HCT116 (cell line): ENCODE measurements at regions of chr14 and their contacts with region 1.

Region 1: DNA sequence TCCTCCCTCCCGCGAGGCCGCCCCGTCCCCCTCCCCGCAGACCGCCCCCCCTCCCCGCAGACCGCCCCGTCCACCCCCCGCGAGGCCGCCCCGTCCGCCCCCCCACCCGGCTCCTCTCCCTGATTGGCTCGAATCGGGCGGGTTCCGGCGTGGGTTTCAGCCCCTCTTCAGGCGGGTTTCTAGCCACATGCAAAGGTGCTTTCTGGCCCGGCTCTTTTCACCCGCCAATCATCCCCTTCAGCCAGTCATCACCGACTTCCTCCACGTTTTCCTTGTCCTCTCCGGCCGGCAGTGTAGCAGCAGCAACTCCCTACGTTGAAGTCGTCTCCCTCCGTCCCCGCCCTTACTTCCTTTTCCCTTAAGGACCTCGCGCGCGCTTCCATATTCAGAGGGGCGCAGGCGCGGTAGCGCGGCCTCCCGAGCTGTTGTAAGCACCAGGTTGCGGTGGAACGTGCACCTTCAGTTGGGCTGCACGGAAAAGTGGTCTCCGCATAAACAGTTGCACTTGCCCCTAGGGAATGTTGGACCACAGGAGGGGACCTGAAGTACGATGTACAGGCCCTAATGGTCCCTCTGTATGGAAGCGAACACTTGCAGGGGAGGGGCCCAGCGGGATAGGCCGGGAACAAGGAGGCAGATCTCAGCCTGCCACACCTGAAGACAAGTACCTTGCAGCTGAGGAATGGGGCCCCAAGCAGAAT is 44.6 kb upstream of the ESR2 start:
- DNase-seq: peak; percentile 97
- ATAC-seq: peak; percentile 87
- H3K4me3 ChIP-seq: peak overlapping the region; percentile 80 to 81
- H3K27ac ChIP-seq: peak overlapping the region; percentile 93
- H3K4me1 ChIP-seq: peaks cover 11 to 19% of the 10 kb centered on the region in 2 experiments; a peak in 3 of 4 replicates
- H3K27me3 ChIP-seq: no peaks in the 10 kb centered on the region
- CTCF ChIP-seq: no peak
- POLR2A ChIP-seq: peak; percentile 61
- RAD21 ChIP-seq: no peak

Region 2: GRCh38 chr14:64478634-64479250 is 140.0 kb after region 1 on chr14:
- CTCF ChIA-PET with region 1: interaction called, 15 read pairs
- POLR2A ChIA-PET with region 1: no interaction called
- RAD21 ChIA-PET with region 1: interaction called in 1 of 2 experiments, 3 read pairs
- intact Hi-C with region 1: no loop called
- DNase-seq: no peak
- ATAC-seq: no peak
- H3K4me3 ChIP-seq: no peak overlapping the region
- H3K27ac ChIP-seq: no peak overlapping the region
- H3K4me1 ChIP-seq: no peaks in the 10 kb centered on the region
- H3K27me3 ChIP-seq: no peaks in the 10 kb centered on the region
- CTCF ChIP-seq: peak; percentile 21 to 38 (median 30); a peak in 3 of 6 replicates
- POLR2A ChIP-seq: no peak
- RAD21 ChIP-seq: peak; percentile 55

Region 3: DNA sequence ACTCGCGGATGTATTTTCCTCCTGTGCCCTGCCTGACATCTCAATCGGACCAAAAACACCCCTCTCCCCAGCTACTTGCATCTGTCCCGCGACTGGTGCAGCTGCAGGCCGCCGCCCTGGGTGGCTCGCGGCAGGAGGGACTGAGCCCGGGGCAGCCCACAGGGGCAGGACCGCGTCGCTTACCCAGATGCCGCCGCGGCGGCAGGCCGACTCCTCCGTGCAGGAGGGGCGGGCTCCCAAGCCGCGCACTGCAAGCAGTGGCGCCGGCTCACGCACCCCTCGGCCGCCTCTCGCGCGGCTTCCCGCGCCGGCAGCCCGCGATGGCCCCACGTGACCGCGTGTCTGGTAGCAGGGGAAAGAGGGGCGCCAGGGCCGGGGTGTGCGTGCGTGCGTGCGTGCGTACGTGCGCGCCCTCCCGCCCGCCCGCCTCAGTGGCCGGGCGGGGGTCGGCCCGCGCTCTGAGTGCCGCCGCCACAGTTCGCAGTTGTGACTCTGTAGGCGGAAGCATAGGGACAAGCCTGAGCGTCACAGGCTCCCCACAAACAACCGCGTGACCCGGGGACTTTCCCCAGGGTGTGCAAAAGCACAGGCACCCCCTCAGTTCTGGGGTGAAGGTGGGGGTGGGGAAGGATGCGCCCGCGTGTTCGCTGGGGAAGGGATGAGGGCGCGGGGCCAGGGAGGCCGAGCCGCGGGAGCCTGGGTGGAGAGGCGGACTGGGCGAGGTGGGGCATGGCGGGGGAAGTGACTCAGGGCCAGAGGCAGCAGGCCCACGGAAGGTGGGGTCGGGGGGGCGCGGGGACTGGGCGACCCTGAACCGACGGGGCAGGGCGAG is 164.9 kb after region 1 on chr14 and contains the start of gene ZBTB25:
- CTCF ChIA-PET with region 1: no interaction called
- POLR2A ChIA-PET with region 1: no interaction called
- RAD21 ChIA-PET with region 1: no interaction called
- intact Hi-C with region 1: loop called (anchors 2 kb)
- DNase-seq: peak; percentile 90
- ATAC-seq: peak; percentile 76
- H3K4me3 ChIP-seq: peak within 1 kb of the TSS; percentile 74 to 97
- H3K27ac ChIP-seq: peak within 1 kb of the TSS; percentile 95
- H3K4me1 ChIP-seq: peaks cover 30 to 51% of the 10 kb centered on the region in 2 experiments
- H3K27me3 ChIP-seq: no peaks in the 10 kb centered on the region
- CTCF ChIP-seq: no peak
- POLR2A ChIP-seq: peak; percentile 73
- RAD21 ChIP-seq: no peak
- total RNA-seq, gene ZBTB25: 19.0 TPM

Region 4: DNA sequence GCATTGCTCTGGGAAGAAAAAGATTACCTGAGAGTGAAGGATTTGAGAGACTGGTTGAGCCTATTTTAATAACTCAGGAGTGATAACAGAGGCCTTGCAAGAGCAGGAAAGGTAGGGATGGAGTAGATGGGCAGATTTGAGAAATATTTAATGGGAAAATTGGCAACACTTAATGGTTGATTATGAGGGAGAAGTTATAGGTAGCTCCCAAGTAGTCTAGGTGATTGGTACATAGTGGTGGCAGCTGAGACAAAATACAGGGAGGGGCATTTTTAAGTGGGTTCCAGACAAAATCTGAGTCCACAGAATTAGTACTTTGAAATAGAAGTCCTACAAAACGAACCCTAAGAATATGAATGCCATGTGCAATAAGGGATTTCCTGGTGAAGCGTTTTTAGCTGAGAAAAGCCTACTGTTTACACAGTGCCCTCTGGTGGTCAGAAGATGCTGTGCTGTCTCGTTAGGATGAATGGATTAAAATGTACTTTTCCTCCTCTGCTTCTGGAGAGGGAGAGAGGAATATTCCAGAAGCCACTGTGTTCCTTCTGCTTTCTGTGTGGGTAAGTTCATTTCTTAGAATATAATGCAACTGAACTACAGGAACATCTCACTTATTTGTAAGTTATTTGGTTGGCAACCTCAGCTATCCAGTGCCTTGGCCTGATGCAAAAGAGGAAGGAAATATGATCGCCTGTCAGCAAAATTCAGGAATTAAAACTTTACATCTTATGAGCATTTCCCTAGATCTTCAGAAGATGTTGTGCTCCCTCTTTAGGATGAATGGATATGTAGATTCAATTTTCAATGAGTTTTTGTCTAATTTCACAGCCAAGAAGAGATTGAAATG is 172.3 kb after region 1 on chr14:
- CTCF ChIA-PET with region 1: interaction called, 17 read pairs
- POLR2A ChIA-PET with region 1: no interaction called
- RAD21 ChIA-PET with region 1: interaction called in 1 of 2 experiments, 7 read pairs
- intact Hi-C with region 1: no loop called
- DNase-seq: peak; percentile 56
- ATAC-seq: peak; percentile 82
- H3K4me3 ChIP-seq: no peak overlapping the region
- H3K27ac ChIP-seq: no peak overlapping the region; the same call in 1 of the 2 replicates
- H3K4me1 ChIP-seq: peaks cover 15 to 36% of the 10 kb centered on the region in 2 experiments; a peak in 3 of 4 replicates
- H3K27me3 ChIP-seq: no peaks in the 10 kb centered on the region
- CTCF ChIP-seq: peak in 2 of 3 experiments; percentile 89 to 95; a peak in 4 of 6 replicates
- POLR2A ChIP-seq: no peak
- RAD21 ChIP-seq: no peak

Region 5: DNA sequence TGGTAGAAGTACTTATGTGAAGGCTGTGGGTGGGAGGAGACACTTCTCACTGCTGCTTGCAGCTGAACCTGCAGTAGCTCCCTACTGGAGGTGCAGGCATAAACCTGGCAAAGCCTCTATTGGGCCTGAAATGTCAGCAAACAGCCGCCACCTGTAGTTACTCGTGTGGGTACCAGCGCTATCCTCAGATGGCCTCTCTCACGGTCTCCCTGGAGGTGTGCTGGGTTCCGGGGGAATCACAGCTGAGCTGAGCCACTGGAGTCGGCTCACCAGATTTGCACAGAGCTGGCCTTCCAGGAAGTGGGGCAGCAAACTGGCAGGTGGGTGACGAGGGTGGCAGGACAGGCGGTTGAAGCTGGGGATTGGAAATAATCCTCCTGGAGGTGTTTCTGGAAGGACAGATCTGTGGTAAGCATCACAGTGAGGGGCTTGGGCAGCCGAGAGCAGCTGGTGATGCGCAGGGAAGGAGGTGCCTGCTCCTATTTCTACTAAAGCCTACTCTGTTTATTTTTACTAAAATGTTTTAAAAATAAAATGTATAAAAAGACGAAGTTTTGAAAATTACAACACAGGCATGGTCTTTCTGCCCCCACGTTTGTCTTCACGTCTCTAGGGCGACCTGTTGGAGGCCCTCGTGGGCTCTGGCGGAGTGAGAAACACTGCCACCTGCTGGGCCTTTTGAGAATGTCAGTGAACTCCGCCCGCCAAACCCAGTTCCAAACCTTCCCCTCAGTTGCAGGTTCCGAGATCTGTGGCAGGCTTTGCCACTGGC is 297.6 kb after region 1 on chr14:
- CTCF ChIA-PET with region 1: interaction called, 17 read pairs
- POLR2A ChIA-PET with region 1: no interaction called
- RAD21 ChIA-PET with region 1: interaction called in 1 of 2 experiments, 4 read pairs
- intact Hi-C with region 1: no loop called
- DNase-seq: peak; percentile 47
- ATAC-seq: peak; percentile 98
- H3K4me3 ChIP-seq: no peak overlapping the region
- H3K27ac ChIP-seq: no peak overlapping the region
- H3K4me1 ChIP-seq: peaks cover 2 to 8% of the 10 kb centered on the region in 2 experiments; a peak in 2 of 4 replicates
- H3K27me3 ChIP-seq: no peaks in the 10 kb centered on the region
- CTCF ChIP-seq: peak; percentile 78 to 94 (median 79)
- POLR2A ChIP-seq: no peak
- RAD21 ChIP-seq: peak; percentile 87

Region 6: DNA sequence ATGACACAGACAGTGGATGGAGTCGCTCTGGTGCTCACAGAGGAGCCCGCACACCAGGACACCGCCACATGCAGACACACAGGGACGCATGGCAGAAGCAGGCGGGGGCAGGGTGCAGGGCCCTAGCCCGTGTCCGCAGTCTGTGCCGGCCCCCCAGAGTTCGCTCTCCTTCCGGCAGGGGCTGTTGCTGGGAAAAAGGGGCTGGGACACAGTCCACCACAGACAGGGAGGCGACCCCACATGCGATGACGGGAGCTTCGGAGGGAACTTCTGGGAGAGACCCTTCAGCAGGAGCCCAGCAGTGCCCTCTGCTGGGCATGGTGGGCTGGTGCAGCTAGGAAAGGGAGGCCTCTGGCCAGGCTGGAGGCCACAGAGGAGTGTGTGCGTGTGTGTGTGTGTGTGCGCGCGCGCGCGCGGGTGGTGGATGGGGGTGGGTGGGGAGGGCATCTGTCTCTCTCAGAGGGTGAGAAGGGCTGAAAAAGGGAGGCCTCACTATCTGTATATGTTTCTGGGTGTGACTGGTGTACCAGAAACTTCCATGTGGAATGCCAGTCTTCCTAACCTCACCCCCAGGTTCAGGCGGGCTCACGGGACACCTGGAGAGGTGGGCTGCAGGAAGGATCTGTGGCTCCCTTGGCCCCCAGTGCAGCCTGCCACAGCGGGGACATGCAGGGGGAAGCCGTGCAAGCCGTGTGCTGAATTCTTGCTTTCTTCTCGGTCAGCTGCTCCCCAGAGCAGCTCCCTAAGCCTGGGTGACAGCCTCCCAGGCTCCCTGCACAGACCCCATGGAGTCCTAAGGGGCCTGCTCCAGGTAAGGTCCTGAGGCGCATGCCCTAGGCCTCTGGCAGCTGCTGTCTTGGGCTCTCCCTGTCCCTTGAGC is 426.1 kb after region 1 on chr14:
- CTCF ChIA-PET with region 1: interaction called, 4 read pairs
- POLR2A ChIA-PET with region 1: no interaction called
- RAD21 ChIA-PET with region 1: no interaction called
- intact Hi-C with region 1: loop called (anchors 5 kb)
- DNase-seq: peak; percentile 44
- ATAC-seq: peak; percentile 64
- H3K4me3 ChIP-seq: no peak overlapping the region
- H3K27ac ChIP-seq: no peak overlapping the region
- H3K4me1 ChIP-seq: peaks cover 33 to 60% of the 10 kb centered on the region in 2 experiments
- H3K27me3 ChIP-seq: no peaks in the 10 kb centered on the region
- CTCF ChIP-seq: peak; percentile 72 to 96 (median 79); a peak in 5 of 6 replicates
- POLR2A ChIP-seq: no peak
- RAD21 ChIP-seq: peak; percentile 85